ENCODE measurements at regions of chr15 and their contacts with region 1.

Region 1: DNA sequence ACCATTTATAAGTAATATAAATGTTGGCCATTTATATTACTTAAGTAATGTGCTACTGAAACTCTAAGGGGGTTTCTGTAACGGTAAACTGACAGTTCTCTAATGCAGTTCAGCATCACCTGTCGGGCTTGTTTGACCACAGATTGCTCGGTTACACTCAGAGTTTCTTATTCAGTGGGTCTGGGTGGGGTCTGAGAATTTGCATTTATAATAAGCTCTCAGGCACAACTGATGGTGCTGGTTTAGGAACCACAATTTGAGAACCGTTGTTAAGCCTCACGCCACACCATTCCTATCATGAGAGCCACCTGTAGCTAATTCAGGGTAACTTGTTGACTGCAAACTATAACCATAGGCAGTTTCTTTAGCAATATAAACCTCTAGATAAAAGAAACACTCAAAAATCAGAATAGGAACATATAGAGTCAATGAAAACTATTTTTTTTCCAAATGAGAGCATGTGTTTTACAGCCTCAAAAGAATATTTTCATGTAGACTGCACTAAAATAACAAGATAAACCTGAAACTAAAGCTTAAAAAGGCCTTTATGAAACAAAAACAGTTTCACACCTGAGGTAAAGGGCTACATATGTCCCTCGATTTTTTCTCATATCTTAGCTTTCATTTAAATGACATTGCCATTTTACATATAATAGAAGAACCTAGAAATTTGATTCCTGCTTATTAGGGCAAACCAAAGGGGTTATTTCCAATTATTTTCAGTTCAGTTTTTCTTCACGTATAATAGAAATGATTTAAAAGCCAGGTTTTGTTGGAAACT is 604.8 kb downstream of the UNC13C start:
- DNase-seq: peak; percentile 74
- ATAC-seq: peak; percentile 74; the same call in 2 of the 3 replicates
- H3K4me3 ChIP-seq: no peak overlapping the region
- H3K27ac ChIP-seq: no peak overlapping the region; the same call in 1 of the 2 replicates
- H3K4me1 ChIP-seq: 0 out of 2 replicates have a peak, but pooled peaks cover 3% of the 10 kb centered on the region
- H3K27me3 ChIP-seq: no peaks in the 10 kb centered on the region
- CTCF ChIP-seq: no peak
- EP300 ChIP-seq: peak; percentile 78 to 94
- POLR2A ChIP-seq: no peak
- RAD21 ChIP-seq: no peak

Region 2: DNA sequence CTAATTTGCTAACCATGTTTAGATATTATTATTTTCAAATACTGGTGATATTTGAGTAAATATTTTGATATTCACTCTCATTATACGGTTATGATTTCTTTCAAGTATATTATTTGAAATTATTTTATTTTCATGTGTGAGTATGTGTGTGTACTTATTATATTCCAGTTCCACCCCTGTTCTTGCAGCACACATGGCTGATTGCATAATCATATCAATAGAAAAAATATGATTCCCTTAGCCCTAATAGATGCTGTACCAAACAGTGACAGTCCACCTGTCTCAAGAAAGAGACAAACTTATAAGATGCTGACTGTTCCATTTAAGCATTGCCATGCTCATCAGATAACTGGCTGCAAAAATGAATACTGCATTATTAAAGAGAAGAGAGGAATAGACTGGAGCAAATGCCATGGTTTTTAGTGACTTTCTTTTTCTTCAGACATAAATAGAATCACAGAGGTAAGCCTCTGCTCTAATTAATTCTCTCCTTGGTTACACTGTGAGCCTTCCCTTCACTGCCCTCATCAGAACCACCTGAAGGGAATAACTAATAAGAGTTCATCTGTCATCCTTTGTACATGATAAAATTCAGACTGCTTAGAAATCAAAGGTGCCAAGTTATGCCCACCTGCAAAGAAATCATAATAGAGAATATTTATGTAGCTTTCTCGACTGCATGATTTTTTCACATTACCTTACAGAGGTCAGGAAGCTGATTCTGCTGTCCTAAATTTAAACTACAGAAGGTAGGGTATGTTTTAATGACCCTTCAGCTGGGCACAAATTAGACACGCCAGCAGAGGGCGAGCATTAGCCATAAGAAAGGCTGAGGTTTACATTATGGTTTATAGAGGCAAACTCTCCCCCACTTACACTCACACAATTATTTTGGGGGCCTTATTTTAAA is 620.5 kb before region 1 on chr15:
- CTCF ChIA-PET with region 1: interaction called, 3 read pairs
- POLR2A ChIA-PET with region 1: no interaction called
- RAD21 ChIA-PET with region 1: interaction called, 11 read pairs
- SMC1A ChIA-PET with region 1: interaction called, 5 read pairs
- in situ Hi-C with region 1: no loop called
- intact Hi-C with region 1: no loop called
- DNase-seq: no peak
- ATAC-seq: peak; percentile 94
- H3K4me3 ChIP-seq: no peak overlapping the region
- H3K27ac ChIP-seq: no peak overlapping the region
- H3K4me1 ChIP-seq: no peaks in the 10 kb centered on the region
- H3K27me3 ChIP-seq: no peaks in the 10 kb centered on the region
- CTCF ChIP-seq: peak; percentile 42 to 70 (median 61)
- EP300 ChIP-seq: no peak
- POLR2A ChIP-seq: no peak
- RAD21 ChIP-seq: peak; percentile 68

Region 3: GRCh38 chr15:54150255-54150654 is 432.8 kb before region 1 on chr15:
- CTCF ChIA-PET with region 1: interaction called, 3 read pairs
- POLR2A ChIA-PET with region 1: interaction called, 3 read pairs
- RAD21 ChIA-PET with region 1: interaction called, 6 read pairs
- SMC1A ChIA-PET with region 1: interaction called, 9 read pairs
- in situ Hi-C with region 1: no loop called
- intact Hi-C with region 1: loop called (anchors 1 kb)
- DNase-seq: peak; percentile 69
- ATAC-seq: peak; percentile 96
- H3K4me3 ChIP-seq: no peak overlapping the region
- H3K27ac ChIP-seq: no peak overlapping the region
- H3K4me1 ChIP-seq: no peaks in the 10 kb centered on the region
- H3K27me3 ChIP-seq: no peaks in the 10 kb centered on the region
- CTCF ChIP-seq: no peak
- EP300 ChIP-seq: peak; percentile 95
- POLR2A ChIP-seq: no peak
- RAD21 ChIP-seq: peak; percentile 0; the same call in 1 of the 2 replicates

Region 4: GRCh38 chr15:54304321-54304720 is 278.7 kb before region 1 on chr15:
- CTCF ChIA-PET with region 1: no interaction called
- POLR2A ChIA-PET with region 1: interaction called, 10 read pairs
- RAD21 ChIA-PET with region 1: interaction called, 16 read pairs
- SMC1A ChIA-PET with region 1: interaction called, 12 read pairs
- in situ Hi-C with region 1: no loop called
- intact Hi-C with region 1: no loop called
- DNase-seq: no peak
- ATAC-seq: no peak
- H3K4me3 ChIP-seq: no peak overlapping the region
- H3K27ac ChIP-seq: no peak overlapping the region
- H3K4me1 ChIP-seq: no peaks in the 10 kb centered on the region
- H3K27me3 ChIP-seq: no peaks in the 10 kb centered on the region
- CTCF ChIP-seq: no peak
- EP300 ChIP-seq: no peak
- POLR2A ChIP-seq: no peak
- RAD21 ChIP-seq: no peak

Region 5: DNA sequence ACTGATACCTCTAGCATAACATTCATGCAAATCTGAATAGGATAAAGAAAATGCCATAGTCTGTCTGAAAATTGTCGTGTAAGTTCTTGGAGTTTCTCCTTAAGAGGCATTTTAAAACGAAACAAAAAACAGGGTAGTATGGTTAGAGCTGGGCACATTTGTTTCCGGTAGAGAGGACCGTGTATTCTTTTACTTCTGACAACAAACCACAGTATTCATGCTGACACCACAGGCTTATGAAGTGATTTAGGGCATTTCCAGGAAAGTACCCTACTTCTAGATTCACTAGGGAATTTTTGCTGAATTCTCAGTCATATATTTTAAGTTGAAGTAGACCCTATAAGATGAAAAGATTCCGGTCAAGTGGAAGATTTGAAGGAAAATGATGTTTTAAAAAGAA is 63.5 kb before region 1 on chr15:
- CTCF ChIA-PET with region 1: interaction called, 12 read pairs
- POLR2A ChIA-PET with region 1: interaction called, 32 read pairs
- RAD21 ChIA-PET with region 1: interaction called, 85 read pairs
- SMC1A ChIA-PET with region 1: interaction called, 150 read pairs
- in situ Hi-C with region 1: no loop called
- intact Hi-C with region 1: loop called (anchors 1 kb)
- DNase-seq: peak; percentile 52
- ATAC-seq: peak; percentile 74
- H3K4me3 ChIP-seq: no peak overlapping the region
- H3K27ac ChIP-seq: peak overlapping the region; percentile 22; the same call in 1 of the 2 replicates
- H3K4me1 ChIP-seq: no peaks in the 10 kb centered on the region
- H3K27me3 ChIP-seq: no peaks in the 10 kb centered on the region
- CTCF ChIP-seq: no peak
- EP300 ChIP-seq: peak; percentile 42 to 53; a peak in 2 of 4 replicates
- POLR2A ChIP-seq: no peak
- RAD21 ChIP-seq: no peak

Region 6: DNA sequence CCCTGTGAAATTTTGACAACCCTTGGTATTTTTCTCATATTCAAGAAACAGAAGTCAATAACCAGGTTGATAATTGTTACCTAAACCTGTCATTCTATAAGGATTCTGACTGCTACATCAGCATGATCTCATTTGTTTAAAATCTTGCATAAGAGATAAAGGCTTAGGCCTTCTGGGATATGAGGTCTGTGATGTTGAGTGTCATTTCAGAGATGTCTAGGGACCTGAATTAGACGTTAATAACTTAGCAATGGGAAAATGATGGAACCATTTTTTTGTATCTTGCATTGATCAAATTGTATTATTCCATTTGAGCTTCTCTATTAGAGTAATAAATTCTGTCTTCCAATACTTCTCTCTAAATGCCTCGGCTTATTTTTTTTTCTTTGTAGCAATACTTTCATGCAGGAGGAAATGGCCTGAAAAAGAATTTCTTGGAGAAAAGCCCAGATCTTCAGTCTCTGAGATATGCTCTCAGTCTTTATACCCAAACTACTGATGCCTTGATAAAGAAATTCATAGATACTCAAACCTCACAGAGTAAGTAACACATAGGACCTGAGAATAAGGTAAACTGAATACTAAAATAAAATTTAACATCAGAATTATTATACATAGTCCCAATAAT is 15.5 kb before region 1 on chr15:
- CTCF ChIA-PET with region 1: interaction called, 4 read pairs
- POLR2A ChIA-PET with region 1: interaction called, 6 read pairs
- RAD21 ChIA-PET with region 1: interaction called, 36 read pairs
- SMC1A ChIA-PET with region 1: interaction called, 13 read pairs
- in situ Hi-C with region 1: no loop called
- intact Hi-C with region 1: no loop called
- DNase-seq: no peak
- ATAC-seq: no peak
- H3K4me3 ChIP-seq: no peak overlapping the region
- H3K27ac ChIP-seq: no peak overlapping the region
- H3K4me1 ChIP-seq: no peaks in the 10 kb centered on the region
- H3K27me3 ChIP-seq: no peaks in the 10 kb centered on the region
- CTCF ChIP-seq: no peak
- EP300 ChIP-seq: no peak
- POLR2A ChIP-seq: no peak
- RAD21 ChIP-seq: no peak

Region 7: GRCh38 chr15:54618120-54618519 is 35.1 kb after region 1 on chr15:
- CTCF ChIA-PET with region 1: interaction called, 14 read pairs
- POLR2A ChIA-PET with region 1: interaction called, 13 read pairs
- RAD21 ChIA-PET with region 1: interaction called, 15 read pairs
- SMC1A ChIA-PET with region 1: interaction called, 19 read pairs
- in situ Hi-C with region 1: no loop called
- intact Hi-C with region 1: no loop called
- DNase-seq: no peak
- ATAC-seq: peak; percentile 14; the same call in 2 of the 3 replicates
- H3K4me3 ChIP-seq: no peak overlapping the region
- H3K27ac ChIP-seq: no peak overlapping the region
- H3K4me1 ChIP-seq: no peaks in the 10 kb centered on the region
- H3K27me3 ChIP-seq: no peaks in the 10 kb centered on the region
- CTCF ChIP-seq: no peak
- EP300 ChIP-seq: no peak
- POLR2A ChIP-seq: no peak
- RAD21 ChIP-seq: no peak

Region 8: DNA sequence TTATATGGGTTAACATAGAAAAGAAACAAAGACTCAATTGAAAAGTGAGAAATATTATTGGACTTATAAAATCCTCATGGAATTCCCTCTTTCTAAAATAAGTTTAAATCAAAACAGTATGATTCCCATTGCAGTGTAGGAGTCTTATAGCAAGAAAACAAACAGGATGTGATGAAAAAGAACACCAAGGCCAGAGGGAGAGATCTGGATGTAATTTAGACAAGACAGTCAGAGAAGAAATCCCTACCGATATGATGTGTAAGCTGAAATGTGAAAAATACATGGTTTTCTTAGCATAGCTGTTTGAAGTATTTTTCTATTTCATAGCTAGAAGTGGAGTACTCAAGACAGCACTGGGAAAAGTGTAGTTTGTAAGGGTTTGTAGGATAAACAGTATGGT is 92.2 kb after region 1 on chr15:
- CTCF ChIA-PET with region 1: no interaction called
- POLR2A ChIA-PET with region 1: no interaction called
- RAD21 ChIA-PET with region 1: no interaction called
- SMC1A ChIA-PET with region 1: no interaction called
- in situ Hi-C with region 1: no loop called
- intact Hi-C with region 1: no loop called
- DNase-seq: no peak
- ATAC-seq: no peak
- H3K4me3 ChIP-seq: no peak overlapping the region
- H3K27ac ChIP-seq: no peak overlapping the region
- H3K4me1 ChIP-seq: no peaks in the 10 kb centered on the region
- H3K27me3 ChIP-seq: no peaks in the 10 kb centered on the region
- CTCF ChIP-seq: no peak
- EP300 ChIP-seq: no peak
- POLR2A ChIP-seq: no peak
- RAD21 ChIP-seq: no peak